ENCODE measurements at regions of chr12 and their contacts with region 1.

Region 1: DNA sequence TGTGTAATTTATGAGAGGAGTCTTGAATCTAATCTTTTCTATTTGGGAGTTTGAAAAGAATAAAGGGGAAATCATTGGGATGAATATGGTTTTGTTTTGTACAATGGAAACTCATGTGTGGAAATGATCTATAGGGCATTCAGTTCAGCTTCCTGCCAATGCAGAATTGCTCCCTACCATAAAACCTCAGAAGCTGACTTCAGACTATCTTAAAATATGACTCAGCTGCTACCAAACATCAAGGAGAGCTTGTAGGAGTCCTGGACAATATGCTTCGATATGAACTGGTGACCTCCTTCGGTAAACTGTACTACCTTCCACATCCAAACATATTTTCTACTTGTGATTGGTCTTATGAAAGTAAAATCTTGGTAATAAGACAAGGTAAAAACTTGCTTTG is 160.6 kb downstream of the CAPZA3 start:
- DNase-seq: no peak
- ATAC-seq: no peak
- H3K4me3 ChIP-seq: no peak overlapping the region
- H3K27ac ChIP-seq: no peak overlapping the region
- H3K4me1 ChIP-seq: no peaks in the 10 kb centered on the region
- H3K27me3 ChIP-seq: no peaks in the 10 kb centered on the region
- CTCF ChIP-seq: no peak

Region 2: DNA sequence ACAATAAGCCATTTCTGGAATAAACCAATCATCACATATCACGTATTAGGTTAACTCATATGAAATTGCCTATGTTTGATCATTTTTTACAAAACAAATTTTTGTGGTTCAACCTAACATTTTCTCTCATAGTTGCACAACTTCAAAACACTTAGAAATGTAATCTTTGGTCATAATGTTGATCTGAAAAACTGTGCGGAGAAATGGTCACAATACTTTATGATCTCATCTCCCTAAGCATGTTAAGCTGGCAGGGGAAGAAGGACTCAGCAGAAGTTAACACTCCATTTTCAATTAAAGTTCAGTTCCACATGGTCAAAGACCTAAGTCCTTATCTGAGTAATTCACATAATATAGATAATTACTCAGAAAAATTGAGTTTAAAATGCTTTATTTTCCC is 34.2 kb after region 1 on chr12:
- intact Hi-C with region 1: loop called in 1 of 2 experiments (anchors 2 kb)
- DNase-seq: no peak
- ATAC-seq: no peak
- H3K4me3 ChIP-seq: no peak overlapping the region
- H3K27ac ChIP-seq: no peak overlapping the region
- H3K4me1 ChIP-seq: no peaks in the 10 kb centered on the region
- H3K27me3 ChIP-seq: no peaks in the 10 kb centered on the region
- CTCF ChIP-seq: no peak